Esophagus muscularis mucosa (tissue), 4 donors: ENCODE measurements at regions of chr17 and their contacts with region 1.

Region 1: DNA sequence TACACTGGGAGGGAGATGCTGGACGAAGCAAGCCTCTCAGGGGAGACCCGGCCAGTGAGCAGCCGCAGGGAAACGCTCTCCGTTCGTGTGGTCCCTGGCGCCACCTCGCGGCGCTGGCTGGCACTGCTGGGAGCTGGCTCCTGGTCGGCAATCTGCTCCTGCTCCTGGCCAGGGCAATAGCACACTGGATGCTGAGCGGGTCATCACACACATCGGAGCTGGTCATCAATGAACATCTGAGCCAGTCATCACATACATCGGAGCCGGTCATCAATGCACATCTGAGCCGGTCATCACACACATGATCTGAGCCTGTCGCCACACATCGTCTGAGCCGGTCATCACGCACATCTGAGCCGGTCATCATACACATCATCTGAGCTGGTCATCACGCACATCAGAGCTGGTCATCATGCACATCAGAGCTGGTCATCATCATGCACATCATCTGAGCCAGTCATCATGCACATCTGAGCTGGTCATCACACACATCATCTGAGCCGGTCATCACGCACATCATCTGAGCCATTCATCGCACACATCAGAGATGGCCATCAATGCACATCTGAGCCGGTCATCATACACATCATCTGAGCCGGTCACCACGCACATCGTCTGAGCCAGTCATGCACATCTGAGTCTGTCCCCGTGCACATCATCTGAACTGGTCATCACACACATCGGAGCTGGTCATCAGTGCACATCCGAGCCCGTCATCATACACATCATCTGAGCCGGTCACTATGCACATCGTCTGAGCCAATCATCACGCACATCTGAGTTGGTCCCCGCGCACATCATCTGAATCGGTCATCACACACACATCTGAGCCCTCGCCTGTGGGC is 217.3 kb downstream of the RBFOX3 start:
- DNase-seq: peak; percentile 95
- H3K4me3 ChIP-seq: no peak overlapping the region
- H3K27ac ChIP-seq: no peak overlapping the region
- H3K4me1 ChIP-seq: peaks cover 0 to 18% (median 8%) of the 10 kb centered on the region in 4 donors
- H3K27me3 ChIP-seq: peaks cover 0 to 100% (median 10%) of the 10 kb centered on the region in 4 donors
- CTCF ChIP-seq: peak; percentile 82 to 94 (median 88)
- EP300 ChIP-seq: no peak
- POLR2A ChIP-seq: no peak

Region 2: GRCh38 chr17:79045842-79046196 is 347.8 kb before region 1 on chr17:
- intact Hi-C with region 1: loop called (anchors 5 kb)
- DNase-seq: no peak
- H3K4me3 ChIP-seq: no peak overlapping the region
- H3K27ac ChIP-seq: peak overlapping the region in 2 of 4 donors; percentile 45 to 61
- H3K4me1 ChIP-seq: peaks cover 24 to 42% (median 29%) of the 10 kb centered on the region in 4 donors
- H3K27me3 ChIP-seq: no peaks in the 10 kb centered on the region
- CTCF ChIP-seq: peak; percentile 86 to 99 (median 91)
- EP300 ChIP-seq: no peak
- POLR2A ChIP-seq: no peak

Region 3: DNA sequence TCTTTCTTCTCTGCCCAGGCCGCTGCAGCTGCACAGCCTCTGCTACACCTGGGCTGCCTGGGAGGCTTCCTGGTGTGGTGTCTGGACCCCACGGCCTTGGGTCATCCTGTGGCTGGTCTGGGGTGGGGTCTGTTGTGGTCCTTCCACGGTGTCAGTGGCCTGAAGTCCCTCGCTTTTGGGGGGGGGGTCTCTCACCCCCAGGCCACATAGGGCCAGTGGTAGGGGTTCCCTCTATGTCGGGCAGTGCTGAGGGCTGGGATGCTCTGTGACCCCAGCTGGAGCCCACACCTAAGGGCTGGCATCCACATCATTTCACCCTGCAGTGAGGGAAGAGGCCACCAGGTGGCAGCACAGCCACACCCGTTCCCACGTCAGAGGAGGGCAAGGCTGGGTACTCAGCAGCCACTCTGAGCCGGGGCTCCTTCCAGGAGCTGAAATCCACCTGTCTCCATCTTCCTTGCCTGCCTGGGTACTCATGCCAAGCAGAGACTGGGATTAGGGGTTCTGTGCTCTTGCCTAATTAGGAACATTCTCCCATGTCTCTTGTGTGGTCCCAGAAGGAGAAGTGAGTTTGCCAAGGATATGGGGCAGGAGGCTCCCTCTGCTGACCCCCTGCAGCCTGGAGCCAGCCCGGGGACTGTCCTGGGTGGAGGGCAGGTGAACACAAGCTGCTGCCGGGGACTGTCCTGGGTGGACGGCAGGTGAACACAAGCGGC is 306.0 kb before region 1 on chr17:
- intact Hi-C with region 1: loop called (anchors 1 kb)
- DNase-seq: no peak
- H3K4me3 ChIP-seq: no peak overlapping the region
- H3K27ac ChIP-seq: no peak overlapping the region
- H3K4me1 ChIP-seq: peaks cover 1 to 19% (median 12%) of the 10 kb centered on the region in 4 donors
- H3K27me3 ChIP-seq: peaks cover 0 to 26% (median 0%) of the 10 kb centered on the region in 4 donors
- CTCF ChIP-seq: peak in 2 of 3 experiments; percentile 79 to 87
- EP300 ChIP-seq: no peak
- POLR2A ChIP-seq: no peak

Region 4: GRCh38 chr17:79355165-79355564 is 38.4 kb before region 1 on chr17:
- intact Hi-C with region 1: no loop called
- DNase-seq: no peak
- H3K4me3 ChIP-seq: no peak overlapping the region
- H3K27ac ChIP-seq: no peak overlapping the region
- H3K4me1 ChIP-seq: no peaks in the 10 kb centered on the region
- H3K27me3 ChIP-seq: peaks cover 0 to 53% (median 0%) of the 10 kb centered on the region in 4 donors
- CTCF ChIP-seq: no peak
- EP300 ChIP-seq: no peak
- POLR2A ChIP-seq: no peak

Region 5: DNA sequence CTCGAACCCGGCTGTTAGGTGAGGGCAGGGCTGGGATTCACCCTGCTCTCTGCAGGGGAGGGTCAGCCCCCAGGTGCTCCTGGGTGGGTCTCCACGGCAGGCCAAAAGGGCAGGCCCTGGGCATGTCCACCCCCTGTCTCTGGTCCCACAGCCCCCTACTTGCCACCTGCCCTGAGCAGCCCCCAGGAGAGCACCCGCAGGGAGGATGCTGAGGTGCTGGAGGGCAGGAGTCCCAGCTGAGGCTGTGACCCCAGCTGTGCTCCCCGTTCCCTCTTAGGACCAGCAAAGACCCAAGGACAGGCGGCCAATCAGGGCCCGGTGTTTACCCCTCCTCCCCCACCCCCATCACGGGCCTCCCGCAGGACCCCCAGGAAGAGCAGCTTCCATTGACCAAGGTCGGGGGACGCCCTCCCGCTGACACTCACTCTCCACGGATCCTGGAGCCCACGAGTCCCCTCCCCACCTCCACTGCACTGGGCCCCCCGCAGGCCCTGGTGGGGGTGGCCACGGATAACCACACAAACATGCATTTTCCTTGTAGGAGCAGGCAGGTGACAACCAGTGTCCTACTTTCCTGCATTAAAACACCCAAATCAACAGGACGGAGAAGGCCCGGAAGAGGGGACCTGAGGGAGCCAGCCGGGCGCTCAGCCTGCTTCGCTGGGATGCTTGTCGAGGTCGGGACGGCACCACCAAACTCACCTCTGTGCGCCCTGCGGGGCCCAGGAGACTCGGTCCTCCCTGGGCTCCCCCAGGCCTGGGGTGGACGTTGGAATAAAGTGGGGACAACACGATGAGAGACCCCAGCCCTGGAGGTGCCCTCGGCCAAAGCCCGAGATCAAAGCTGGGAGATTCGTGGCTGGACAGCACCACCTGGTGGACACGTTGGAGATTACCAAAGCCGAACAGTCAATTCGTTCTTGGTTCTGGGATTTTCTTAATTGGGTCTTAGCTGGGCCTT is 314.6 kb after region 1 on chr17:
- intact Hi-C with region 1: loop called (anchors 10 kb)
- DNase-seq: no peak
- H3K4me3 ChIP-seq: peak overlapping the region; percentile 30 to 47 (median 35)
- H3K27ac ChIP-seq: no peak overlapping the region
- H3K4me1 ChIP-seq: peaks cover 0 to 23% (median 13%) of the 10 kb centered on the region in 4 donors
- H3K27me3 ChIP-seq: peaks cover 0 to 46% (median 0%) of the 10 kb centered on the region in 4 donors
- CTCF ChIP-seq: peak; percentile 68 to 84 (median 72)
- EP300 ChIP-seq: no peak
- POLR2A ChIP-seq: no peak